Caco-2 (cell line): ENCODE measurements at regions of chrX and their contacts with region 1.

Region 1: DNA sequence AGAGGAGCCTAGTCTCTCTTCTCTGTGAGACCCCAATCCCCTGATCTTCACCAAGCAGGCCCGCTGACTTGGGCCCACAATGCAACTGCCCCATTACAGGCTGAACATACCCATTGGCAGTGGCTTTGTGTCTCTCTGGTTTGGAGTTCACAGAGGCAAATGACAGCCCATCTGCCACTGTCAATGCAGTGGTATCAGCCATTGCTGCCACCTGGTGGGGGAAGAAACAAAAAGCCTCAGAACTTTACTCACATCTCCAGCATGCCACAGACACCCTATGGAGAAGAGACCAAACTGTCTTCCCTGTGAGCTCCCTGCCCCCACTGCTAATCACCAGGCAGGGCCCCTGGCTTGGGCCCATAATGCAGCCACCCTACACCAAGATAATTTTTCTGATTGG is 729.3 kb upstream of the ACTRT1 start:
- DNase-seq: peak; percentile 32 to 51
- H3K4me3 ChIP-seq: no peak overlapping the region
- H3K4me3 Mint-ChIP-seq: no peak overlapping the region
- H3K27ac Mint-ChIP-seq: no peak overlapping the region
- H3K4me1 ChIP-seq: no peaks in the 10 kb centered on the region
- H3K4me1 Mint-ChIP-seq: no peaks in the 10 kb centered on the region
- H3K27me3 ChIP-seq: no peaks in the 10 kb centered on the region
- H3K27me3 Mint-ChIP-seq: no peaks in the 10 kb centered on the region
- CTCF ChIP-seq: peak; percentile 28

Region 2: GRCh38 chrX:128106630-128107029 is 674.9 kb before region 1 on chrX:
- CTCF ChIA-PET with region 1: no interaction called
- POLR2A ChIA-PET with region 1: no interaction called
- intact Hi-C with region 1: loop called (anchors 1 kb)
- DNase-seq: peak in 1 of 2 experiments; percentile 1
- H3K4me3 ChIP-seq: no peak overlapping the region
- H3K4me3 Mint-ChIP-seq: no peak overlapping the region
- H3K27ac Mint-ChIP-seq: no peak overlapping the region
- H3K4me1 ChIP-seq: no peaks in the 10 kb centered on the region
- H3K4me1 Mint-ChIP-seq: no peaks in the 10 kb centered on the region
- H3K27me3 ChIP-seq: no peaks in the 10 kb centered on the region
- H3K27me3 Mint-ChIP-seq: peaks cover 4% of the 10 kb centered on the region
- CTCF ChIP-seq: peak; percentile 19 to 31

Region 3: DNA sequence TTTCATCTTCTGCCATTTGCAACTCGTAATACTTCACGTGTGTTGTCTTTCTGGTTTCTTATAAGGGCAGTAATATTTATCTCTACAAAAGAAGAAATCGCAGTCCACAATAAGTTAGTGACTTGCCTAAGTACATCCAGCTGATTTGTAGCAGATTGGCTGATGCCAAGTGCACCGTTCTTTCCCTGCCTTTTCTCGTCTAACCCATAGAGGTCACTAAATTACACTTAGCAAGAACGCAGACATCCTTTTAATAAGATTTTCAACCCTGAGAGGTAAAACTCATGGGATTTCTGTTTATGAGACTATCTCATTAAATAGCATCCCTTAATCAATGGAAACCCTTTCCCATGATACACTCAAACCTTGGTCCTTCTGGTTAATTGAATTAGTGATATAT is 320.7 kb before region 1 on chrX:
- CTCF ChIA-PET with region 1: no interaction called
- POLR2A ChIA-PET with region 1: no interaction called
- intact Hi-C with region 1: loop called (anchors 5 kb)
- DNase-seq: no peak
- H3K4me3 ChIP-seq: no peak overlapping the region
- H3K4me3 Mint-ChIP-seq: no peak overlapping the region
- H3K27ac Mint-ChIP-seq: no peak overlapping the region
- H3K4me1 ChIP-seq: no peaks in the 10 kb centered on the region
- H3K4me1 Mint-ChIP-seq: no peaks in the 10 kb centered on the region
- H3K27me3 ChIP-seq: no peaks in the 10 kb centered on the region
- H3K27me3 Mint-ChIP-seq: peaks cover 3% of the 10 kb centered on the region
- CTCF ChIP-seq: peak in 1 of 2 experiments; percentile 1